ENCODE measurements at regions of chr17 and their contacts with region 1.

Region 1: DNA sequence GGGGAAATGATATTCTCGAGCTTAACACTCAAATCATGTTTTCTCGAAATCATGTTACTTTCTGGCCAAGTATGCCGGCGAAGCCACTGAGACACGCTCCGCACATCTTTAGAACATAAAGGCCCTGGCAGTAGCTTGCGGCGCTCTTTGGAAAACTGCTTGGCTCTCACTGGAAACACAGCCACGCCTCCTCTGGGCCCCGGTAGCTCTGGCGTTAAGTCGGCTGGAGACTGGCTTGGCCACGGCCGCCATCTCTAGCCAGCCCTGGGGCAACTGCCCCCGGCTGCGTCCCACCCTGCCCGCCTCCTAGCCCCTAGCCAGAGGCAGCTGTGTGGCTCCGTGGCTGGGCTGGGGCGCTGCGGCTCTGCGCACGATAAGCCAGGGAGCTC is 9.2 kb upstream of the BAIAP2 start:
- DNase-seq: peak in 1 of 9 experiments; percentile 4
- ATAC-seq: no peak
- H3K4me3 ChIP-seq: no peak overlapping the region
- H3K4me3 Mint-ChIP-seq: no peak overlapping the region
- H3K27ac ChIP-seq: no peak overlapping the region
- H3K27ac Mint-ChIP-seq: no peak overlapping the region
- H3K4me1 ChIP-seq: peaks cover 9% of the 10 kb centered on the region
- H3K4me1 Mint-ChIP-seq: peaks cover 12% of the 10 kb centered on the region
- H3K27me3 ChIP-seq: no peaks in the 10 kb centered on the region
- H3K27me3 Mint-ChIP-seq: peaks cover 8% of the 10 kb centered on the region
- CTCF ChIP-seq: no peak

Region 2: GRCh38 chr17:80374732-80375585 is 650.8 kb before region 1 on chr17:
- CTCF ChIA-PET with region 1: no interaction called
- POLR2A ChIA-PET with region 1: no interaction called
- intact Hi-C with region 1: no loop called
- DNase-seq: no peak
- ATAC-seq: no peak
- H3K4me3 ChIP-seq: no peak overlapping the region
- H3K4me3 Mint-ChIP-seq: no peak overlapping the region
- H3K27ac ChIP-seq: no peak overlapping the region
- H3K27ac Mint-ChIP-seq: no peak overlapping the region
- H3K4me1 ChIP-seq: no peaks in the 10 kb centered on the region
- H3K4me1 Mint-ChIP-seq: no peaks in the 10 kb centered on the region
- H3K27me3 ChIP-seq: no peaks in the 10 kb centered on the region
- H3K27me3 Mint-ChIP-seq: no peaks in the 10 kb centered on the region
- CTCF ChIP-seq: no peak

Region 3: DNA sequence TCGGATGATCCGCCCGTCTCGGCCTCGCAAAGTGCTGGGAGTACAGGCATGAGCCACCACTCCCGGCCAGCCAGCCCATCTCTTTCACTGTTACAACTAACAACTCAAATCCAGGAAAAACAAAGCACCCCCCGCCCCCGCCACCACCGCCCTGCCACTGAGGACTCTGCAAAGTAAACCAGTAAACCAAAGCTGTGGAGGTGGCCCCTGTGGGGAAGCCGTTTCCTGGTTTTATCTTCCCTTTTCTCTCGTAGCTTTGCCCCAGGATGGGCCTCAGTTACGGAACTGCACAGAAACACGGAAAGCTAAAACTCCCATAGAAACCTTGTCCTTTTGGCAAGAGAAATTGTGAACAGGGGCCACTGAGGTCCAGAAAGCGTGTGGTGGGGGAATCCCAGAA is 16.6 kb before region 1 on chr17:
- CTCF ChIA-PET with region 1: interaction called, 25 read pairs
- POLR2A ChIA-PET with region 1: interaction called, 3 read pairs
- intact Hi-C with region 1: no loop called
- DNase-seq: no peak
- ATAC-seq: no peak
- H3K4me3 ChIP-seq: no peak overlapping the region
- H3K4me3 Mint-ChIP-seq: no peak overlapping the region
- H3K27ac ChIP-seq: no peak overlapping the region
- H3K27ac Mint-ChIP-seq: no peak overlapping the region
- H3K4me1 ChIP-seq: peaks cover 8% of the 10 kb centered on the region
- H3K4me1 Mint-ChIP-seq: peaks cover 5% of the 10 kb centered on the region
- H3K27me3 ChIP-seq: peaks cover 0 to 12% of the 10 kb centered on the region in 2 experiments
- H3K27me3 Mint-ChIP-seq: peaks cover 13% of the 10 kb centered on the region
- CTCF ChIP-seq: no peak

Region 4: DNA sequence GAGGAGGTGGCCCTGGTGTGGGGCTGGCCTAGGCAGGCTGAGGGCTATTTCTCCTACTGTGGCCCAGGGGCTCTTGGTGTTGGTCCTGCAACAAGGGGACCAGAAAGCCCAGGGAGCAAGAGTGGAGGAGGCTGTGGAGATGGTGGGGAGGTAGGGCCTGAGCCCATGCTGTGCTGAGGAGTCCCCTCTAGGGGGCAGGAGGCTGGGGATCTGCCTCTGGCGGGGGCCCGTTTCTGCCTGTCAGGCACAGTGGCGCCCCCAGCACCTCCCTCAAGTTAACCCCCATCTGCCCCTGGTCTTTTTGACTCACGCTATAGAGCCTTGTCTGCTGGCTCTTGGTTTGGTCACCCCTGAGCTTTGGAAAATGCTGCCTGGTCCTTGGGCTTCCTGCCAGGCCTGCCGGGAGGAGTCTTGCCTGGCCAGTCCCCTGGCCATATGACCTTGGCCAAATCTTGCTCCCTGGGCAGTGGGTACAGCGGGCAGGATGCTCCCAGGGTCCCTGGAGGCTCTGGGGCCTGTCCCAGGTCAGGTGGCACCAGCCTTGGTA is 15.1 kb after region 1 on chr17:
- CTCF ChIA-PET with region 1: interaction called, 29 read pairs
- POLR2A ChIA-PET with region 1: no interaction called
- intact Hi-C with region 1: no loop called
- DNase-seq: peak in 4 of 9 experiments; percentile 20 to 44 (median 34)
- ATAC-seq: peak; percentile 67
- H3K4me3 ChIP-seq: no peak overlapping the region
- H3K4me3 Mint-ChIP-seq: no peak overlapping the region
- H3K27ac ChIP-seq: no peak overlapping the region
- H3K27ac Mint-ChIP-seq: no peak overlapping the region
- H3K4me1 ChIP-seq: peaks cover 3% of the 10 kb centered on the region
- H3K4me1 Mint-ChIP-seq: peaks cover 10% of the 10 kb centered on the region
- H3K27me3 ChIP-seq: no peaks in the 10 kb centered on the region
- H3K27me3 Mint-ChIP-seq: no peaks in the 10 kb centered on the region
- CTCF ChIP-seq: no peak